Activated CD4-positive, alpha-beta T cell treated with anti-CD3 and anti-CD28 coated beads for 36 hours (primary cell): ENCODE measurements at regions of chr11 and their contacts with region 1.

Region 1: DNA sequence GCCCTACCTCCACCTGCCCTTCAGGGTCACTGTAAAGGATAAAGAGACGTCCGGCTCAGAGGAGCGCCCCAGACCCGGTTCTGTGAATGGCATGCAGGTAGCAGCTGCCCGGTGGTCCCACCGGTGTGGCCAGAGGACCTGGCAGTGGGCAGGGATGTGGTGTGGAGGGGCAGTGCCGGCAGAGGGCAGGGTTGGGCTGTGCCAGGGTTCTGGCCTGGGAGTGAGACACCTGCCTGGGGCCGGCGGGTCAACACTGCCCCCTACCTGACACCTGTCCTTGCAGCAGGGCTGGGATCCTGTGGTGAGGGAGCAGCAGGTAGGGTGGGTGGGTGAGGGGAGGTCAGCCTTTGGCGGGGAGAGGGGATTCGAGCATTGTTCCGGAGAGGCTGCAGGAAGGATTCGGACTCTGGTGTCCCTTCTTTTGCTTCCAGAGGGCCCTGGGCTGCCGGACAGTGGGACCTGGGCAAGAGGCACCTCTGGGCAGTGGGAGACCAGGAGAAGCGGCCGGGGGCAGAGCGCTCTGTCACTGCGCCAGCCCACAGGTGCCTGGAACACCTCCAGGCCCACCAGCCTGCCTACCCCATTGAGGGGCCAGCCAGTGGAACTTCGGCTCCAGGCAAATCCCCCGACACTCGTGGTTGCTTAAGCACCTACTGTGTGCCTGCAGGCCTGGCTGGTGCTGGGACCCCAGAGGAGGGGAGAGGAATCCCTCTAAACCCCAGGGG is 1.6 kb upstream of the PHLDA2 start:
- DNase-seq: peak; percentile 80
- ATAC-seq: peak; percentile 28
- H3K4me3 Mint-ChIP-seq: peak overlapping the region; percentile 61
- H3K27ac Mint-ChIP-seq: peak overlapping the region; percentile 47
- H3K4me1 Mint-ChIP-seq: peaks cover 27% of the 10 kb centered on the region
- H3K27me3 Mint-ChIP-seq: peaks cover 19% of the 10 kb centered on the region

Region 2: DNA sequence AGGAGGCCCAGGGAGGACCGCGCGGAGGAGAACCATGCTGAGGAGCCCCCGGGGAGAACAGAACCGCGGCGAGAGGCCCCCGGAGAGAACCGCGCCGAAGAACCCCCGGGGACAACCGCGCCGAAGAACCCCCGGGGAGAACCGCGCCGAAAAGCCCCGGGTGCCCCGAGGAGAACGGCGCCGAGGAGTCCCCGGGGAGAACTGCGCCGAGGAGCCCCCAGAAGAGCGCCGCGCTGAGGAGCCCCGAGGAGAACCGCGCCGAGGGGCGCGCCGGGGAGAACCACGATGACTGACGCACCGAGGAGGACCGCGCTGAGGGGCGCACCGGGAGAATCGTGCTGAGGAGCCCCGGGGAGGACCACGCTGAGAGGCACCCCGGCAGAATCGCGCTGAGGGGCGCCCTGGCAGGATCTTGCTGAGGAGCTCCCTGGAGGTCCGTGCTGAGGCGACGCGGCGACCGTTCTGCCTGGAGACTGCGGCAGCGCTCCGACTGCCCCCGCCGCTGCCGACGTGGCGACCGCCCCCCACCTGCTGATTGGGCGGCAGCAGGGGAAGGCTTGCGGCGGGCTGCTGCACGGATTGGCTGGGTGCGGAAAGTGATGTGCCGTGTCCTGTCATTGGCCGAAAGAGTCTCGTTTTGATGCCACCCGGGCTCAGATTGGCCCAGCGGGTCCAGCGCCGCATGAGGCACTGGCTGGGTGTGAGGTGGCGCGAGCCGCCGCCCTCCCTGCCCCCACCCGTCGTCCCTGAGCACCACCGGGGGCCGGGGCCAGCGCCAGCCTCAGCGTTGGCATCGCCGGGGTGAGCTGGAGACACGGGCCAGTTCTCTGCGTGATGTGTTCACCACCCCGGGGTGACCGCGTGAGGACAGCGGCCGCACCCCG is 231.1 kb before region 1 on chr11 and contains the start of gene KCNQ1OT1:
- CTCF ChIA-PET with region 1: no interaction called
- POLR2A ChIA-PET with region 1: no interaction called
- intact Hi-C with region 1: loop called in 1 of 2 experiments (anchors 1 kb)
- DNase-seq: peak; percentile 91
- ATAC-seq: peak; percentile 98
- H3K4me3 Mint-ChIP-seq: peak within 1 kb of the TSS; percentile 79
- H3K27ac Mint-ChIP-seq: peak within 1 kb of the TSS; percentile 28
- H3K4me1 Mint-ChIP-seq: peaks cover 8% of the 10 kb centered on the region
- H3K27me3 Mint-ChIP-seq: no peaks in the 10 kb centered on the region
- total RNA-seq, gene KCNQ1OT1: 0.16 TPM

Region 3: GRCh38 chr11:2892215-2893020 is 38.4 kb before region 1 on chr11:
- CTCF ChIA-PET with region 1: interaction called, 14 read pairs
- POLR2A ChIA-PET with region 1: no interaction called
- intact Hi-C with region 1: loop called (anchors 2 to 5 kb)
- DNase-seq: peak; percentile 85
- ATAC-seq: peak; percentile 69
- H3K4me3 Mint-ChIP-seq: peak overlapping the region; percentile 75
- H3K27ac Mint-ChIP-seq: peak overlapping the region; percentile 80
- H3K4me1 Mint-ChIP-seq: peaks cover 18% of the 10 kb centered on the region
- H3K27me3 Mint-ChIP-seq: no peaks in the 10 kb centered on the region

Region 4: DNA sequence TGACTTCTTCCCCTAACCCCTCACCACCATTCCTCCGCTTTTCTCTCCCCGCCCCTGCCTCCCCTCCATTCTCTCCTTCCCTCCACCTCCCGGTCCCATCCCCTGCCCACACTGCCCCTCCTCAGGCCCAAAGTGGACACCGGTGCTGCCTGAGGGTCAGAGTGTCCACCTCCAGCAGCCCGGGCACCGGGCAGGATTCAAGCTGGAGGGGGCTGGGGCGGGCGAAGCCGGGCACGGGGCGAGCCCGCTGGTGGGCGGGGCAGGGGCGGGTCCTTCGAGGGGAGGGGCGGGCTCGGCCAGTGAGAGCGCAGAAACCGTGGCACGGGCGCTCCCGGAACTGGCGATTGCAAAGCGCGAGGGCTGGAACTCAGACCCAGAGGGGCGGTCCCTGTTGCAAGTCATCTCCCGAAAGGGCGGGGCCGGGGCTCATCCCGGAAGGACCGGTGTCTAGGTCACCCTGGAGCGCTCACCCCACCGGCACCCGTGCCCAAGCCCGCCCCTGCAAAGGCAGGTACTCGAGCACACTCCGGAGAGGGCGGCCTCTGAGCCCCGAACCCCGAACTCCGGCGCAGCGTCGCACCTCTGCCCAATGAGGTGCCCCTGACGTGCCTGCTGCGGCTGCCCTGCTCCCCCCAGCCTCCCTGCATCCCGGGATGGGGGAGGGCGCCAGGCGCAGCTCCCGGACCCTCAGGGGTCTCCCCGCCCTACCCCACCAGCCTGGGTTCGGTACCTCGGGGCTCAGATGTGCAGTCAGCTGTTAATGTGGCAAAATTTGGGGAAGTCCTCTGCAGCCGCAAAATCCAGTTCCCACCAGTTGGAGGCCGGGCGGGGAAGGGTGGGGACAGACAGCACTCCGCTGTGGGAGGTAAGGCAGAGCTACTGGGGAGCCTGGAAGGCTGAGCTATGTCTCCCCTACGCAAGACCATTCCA is 28.7 kb before region 1 on chr11:
- CTCF ChIA-PET with region 1: interaction called, 6 read pairs
- POLR2A ChIA-PET with region 1: no interaction called
- intact Hi-C with region 1: loop called in 1 of 2 experiments (anchors 1 kb)
- DNase-seq: peak; percentile 98
- ATAC-seq: peak; percentile 96
- H3K4me3 Mint-ChIP-seq: peak overlapping the region; percentile 64
- H3K27ac Mint-ChIP-seq: peak overlapping the region; percentile 22
- H3K4me1 Mint-ChIP-seq: peaks cover 33% of the 10 kb centered on the region
- H3K27me3 Mint-ChIP-seq: no peaks in the 10 kb centered on the region

Region 5: DNA sequence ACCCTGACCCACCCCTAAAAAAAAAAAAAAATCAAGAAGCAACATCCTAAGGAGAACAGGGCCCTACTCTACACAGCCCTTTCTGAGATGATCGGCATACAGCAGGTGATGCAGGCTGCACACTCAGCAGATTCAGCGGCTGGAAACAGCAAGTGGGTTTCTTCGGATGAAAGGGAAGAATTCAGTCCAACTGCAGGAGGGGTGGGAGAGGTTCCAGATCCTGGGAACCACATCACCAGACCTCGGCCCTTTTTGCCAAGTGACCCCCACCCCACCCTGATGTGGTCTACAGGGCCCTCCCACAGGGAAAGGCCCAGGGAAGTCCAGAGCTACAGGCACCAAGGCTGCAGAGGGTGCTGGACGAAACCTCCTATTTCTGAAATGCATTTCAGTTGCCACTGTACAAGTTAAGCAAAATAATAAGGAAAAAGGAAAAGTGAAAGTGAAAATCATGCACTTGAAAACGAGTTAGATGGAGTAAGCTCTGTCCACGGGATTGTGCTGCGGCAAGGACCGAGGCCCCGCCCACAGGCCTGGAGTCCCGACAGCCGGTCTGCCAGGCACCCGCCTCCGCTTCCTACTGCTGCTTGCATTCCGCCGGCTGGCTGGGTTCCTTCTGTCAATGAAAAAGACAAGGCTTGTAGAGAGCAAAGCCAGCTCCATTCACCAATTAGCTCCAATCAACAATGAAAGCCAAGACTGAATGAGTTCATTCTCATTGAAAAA is 14.3 kb after region 1 on chr11:
- CTCF ChIA-PET with region 1: interaction called, 4 read pairs
- POLR2A ChIA-PET with region 1: interaction called, 10 read pairs
- intact Hi-C with region 1: no loop called
- DNase-seq: peak; percentile 79
- ATAC-seq: peak; percentile 54
- H3K4me3 Mint-ChIP-seq: no peak overlapping the region
- H3K27ac Mint-ChIP-seq: peak overlapping the region; percentile 55
- H3K4me1 Mint-ChIP-seq: peaks cover 45% of the 10 kb centered on the region
- H3K27me3 Mint-ChIP-seq: no peaks in the 10 kb centered on the region

Region 6: DNA sequence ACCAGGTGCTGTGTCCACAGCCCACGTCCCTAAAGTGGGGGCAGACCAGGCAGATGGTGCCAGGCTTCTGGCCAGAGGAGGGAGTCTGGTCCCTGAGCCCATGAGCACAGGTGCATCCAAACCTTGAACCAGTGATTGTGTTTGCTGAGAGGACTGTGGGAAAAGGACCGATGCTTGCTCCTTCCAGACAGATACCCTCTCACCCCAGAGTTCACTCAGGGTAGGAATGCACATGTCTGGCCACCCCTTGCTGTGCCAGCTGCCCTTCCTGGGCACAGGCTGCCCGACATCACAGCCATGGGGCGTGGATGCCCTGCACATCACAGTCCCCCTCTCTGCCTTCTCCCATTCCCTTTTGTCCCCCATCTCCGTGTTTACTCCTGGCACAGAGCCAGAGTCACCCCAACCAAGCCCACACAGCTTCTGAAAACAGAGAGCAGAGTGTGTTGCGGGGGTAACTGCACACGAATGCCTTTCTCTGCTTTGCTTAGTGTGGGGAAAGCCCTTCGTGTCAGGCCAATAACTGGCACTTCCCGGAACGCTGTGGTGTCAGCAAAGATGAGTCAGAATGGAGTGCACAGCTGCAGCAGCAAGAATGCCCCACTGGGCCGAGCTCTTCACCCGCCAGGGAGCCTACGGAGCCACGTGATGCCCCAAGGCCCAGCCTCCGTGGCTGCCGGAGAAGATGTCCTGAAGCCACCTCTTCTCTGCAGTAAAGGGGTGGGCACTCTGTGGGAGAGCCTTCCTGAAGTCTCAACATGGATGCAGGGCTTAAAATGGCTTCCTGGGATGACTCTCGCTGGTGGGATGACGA is 118.8 kb after region 1 on chr11:
- CTCF ChIA-PET with region 1: no interaction called
- POLR2A ChIA-PET with region 1: no interaction called
- intact Hi-C with region 1: no loop called
- DNase-seq: peak; percentile 82
- ATAC-seq: peak; percentile 94
- H3K4me3 Mint-ChIP-seq: no peak overlapping the region
- H3K27ac Mint-ChIP-seq: peak overlapping the region; percentile 88
- H3K4me1 Mint-ChIP-seq: peaks cover 44% of the 10 kb centered on the region
- H3K27me3 Mint-ChIP-seq: no peaks in the 10 kb centered on the region

Region 7: DNA sequence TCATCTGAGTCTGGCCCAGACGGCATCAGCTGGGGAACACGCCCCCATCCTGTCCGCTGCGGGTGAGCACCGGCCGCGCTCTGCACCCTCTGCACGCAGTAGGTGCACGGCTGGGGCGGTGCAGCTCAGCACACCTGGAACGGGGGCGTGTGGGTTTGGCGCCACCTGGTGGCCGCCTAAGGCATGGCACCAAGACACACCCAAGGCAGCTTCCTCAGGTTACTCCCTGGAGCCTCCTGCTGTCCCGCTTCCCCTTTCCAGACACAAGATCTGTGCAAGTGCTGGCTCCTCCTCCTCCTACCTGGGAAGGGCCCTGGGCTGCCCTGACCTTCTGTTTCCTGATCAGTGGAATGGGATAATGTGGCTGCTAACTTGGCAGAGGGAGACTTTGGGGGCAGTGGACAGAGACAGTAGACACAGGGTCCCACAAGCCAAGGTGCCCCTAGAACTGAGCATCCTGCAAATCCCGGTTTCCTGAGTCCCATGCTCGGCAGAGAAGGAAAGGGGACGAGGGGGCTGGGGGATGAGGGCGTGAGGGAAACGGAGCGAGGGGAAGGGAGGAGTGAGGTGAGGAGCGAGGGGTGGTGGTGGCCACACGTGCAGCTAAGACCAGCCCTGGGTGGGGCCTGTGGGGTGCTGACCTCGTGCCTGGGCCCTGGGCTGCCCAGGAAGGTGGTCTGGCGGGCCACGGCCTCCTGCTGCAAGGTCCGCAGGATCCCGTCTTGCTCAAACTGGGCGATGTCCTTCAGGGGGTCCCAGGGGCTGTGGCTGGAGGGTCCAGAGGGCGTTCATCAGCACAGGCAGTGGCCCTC is 161.1 kb after region 1 on chr11:
- CTCF ChIA-PET with region 1: no interaction called
- POLR2A ChIA-PET with region 1: no interaction called
- intact Hi-C with region 1: loop called in 1 of 2 experiments (anchors 1 kb)
- DNase-seq: peak; percentile 84
- ATAC-seq: peak; percentile 88
- H3K4me3 Mint-ChIP-seq: no peak overlapping the region
- H3K27ac Mint-ChIP-seq: no peak overlapping the region
- H3K4me1 Mint-ChIP-seq: no peaks in the 10 kb centered on the region
- H3K27me3 Mint-ChIP-seq: no peaks in the 10 kb centered on the region